ENCODE measurements at regions of chr11 and their contacts with region 1.

Region 1: GRCh38 chr11:130002846-130003716 is 446 bp upstream of the PRDM10 start:
- DNase-seq: peak; percentile 94
- H3K4me3 ChIP-seq: peak overlapping the region; percentile 75
- H3K27ac ChIP-seq: peak overlapping the region; percentile 99
- H3K27me3 ChIP-seq: no peaks in the 10 kb centered on the region
- CTCF ChIP-seq: no peak

Region 2: DNA sequence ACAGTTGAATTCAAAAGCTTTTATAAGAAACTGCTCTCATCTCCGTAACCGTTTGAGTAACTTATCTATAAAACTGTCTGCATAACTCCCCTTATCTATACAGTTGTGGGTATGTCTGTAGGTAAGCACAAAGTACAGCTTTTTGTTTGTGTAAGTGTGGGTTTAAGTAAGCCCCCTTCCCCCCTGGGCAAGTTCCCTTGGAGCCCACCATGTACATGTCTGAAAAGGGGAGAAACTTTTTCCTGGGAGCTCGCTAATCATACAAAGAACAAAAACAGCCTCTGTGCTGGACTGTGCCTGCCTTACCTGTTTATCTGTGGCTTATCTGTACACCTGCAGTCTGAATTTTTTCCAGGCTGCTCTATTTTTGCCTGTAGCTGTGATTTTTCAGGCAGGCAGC is 223.7 kb before region 1 on chr11:
- CTCF ChIA-PET with region 1: no interaction called
- POLR2A ChIA-PET with region 1: no interaction called
- DNase-seq: no peak
- H3K4me3 ChIP-seq: no peak overlapping the region
- H3K27ac ChIP-seq: no peak overlapping the region
- H3K27me3 ChIP-seq: peaks cover 8% of the 10 kb centered on the region
- CTCF ChIP-seq: no peak

Region 3: GRCh38 chr11:129935723-129936122 is 67.4 kb before region 1 on chr11:
- CTCF ChIA-PET with region 1: no interaction called
- POLR2A ChIA-PET with region 1: no interaction called
- DNase-seq: no peak
- H3K4me3 ChIP-seq: no peak overlapping the region
- H3K27ac ChIP-seq: no peak overlapping the region
- H3K27me3 ChIP-seq: no peaks in the 10 kb centered on the region
- CTCF ChIP-seq: no peak

Region 4: DNA sequence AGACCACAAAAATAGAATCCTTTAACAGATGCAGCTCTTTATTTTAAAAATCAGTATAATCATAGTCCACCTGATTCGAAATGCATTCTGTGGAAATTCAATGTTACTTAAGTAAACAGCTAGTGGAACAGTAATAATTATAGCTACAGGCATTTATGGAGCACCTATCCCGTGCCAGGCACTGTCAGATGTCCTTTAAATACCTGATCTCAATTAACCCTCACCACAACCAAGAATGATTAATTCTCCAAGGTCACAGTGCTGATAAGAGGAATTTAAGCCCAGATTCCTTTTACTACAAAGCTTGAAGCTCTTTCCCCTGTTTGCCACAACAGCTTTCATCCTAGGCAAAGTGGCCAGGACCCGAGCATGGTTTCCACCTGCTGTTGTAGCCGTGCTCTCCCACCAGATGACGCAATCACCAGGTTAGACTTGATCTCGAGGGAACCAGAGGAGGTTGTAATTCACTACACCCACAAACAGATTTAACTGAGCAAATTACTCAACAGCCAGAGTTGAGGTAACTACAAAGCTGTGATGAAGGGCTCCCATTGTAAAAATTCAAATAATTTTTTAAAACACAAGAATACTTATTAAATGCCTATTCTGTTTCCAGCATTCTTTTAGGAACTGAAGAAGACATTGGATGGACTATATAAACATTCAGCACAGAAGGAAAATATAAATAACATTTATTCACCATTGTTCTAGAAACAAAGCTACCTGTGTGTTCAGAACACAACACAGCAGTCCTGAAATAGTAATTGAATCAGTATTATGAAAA is 10.7 kb before region 1 on chr11:
- CTCF ChIA-PET with region 1: no interaction called
- POLR2A ChIA-PET with region 1: interaction called, 12 read pairs
- DNase-seq: no peak
- H3K4me3 ChIP-seq: no peak overlapping the region
- H3K27ac ChIP-seq: no peak overlapping the region
- H3K27me3 ChIP-seq: no peaks in the 10 kb centered on the region
- CTCF ChIP-seq: no peak

Region 5: GRCh38 chr11:130020323-130020722 is 17.2 kb after region 1 on chr11:
- CTCF ChIA-PET with region 1: no interaction called
- POLR2A ChIA-PET with region 1: interaction called, 16 read pairs
- DNase-seq: no peak
- H3K4me3 ChIP-seq: no peak overlapping the region
- H3K27ac ChIP-seq: no peak overlapping the region
- H3K27me3 ChIP-seq: no peaks in the 10 kb centered on the region
- CTCF ChIP-seq: no peak

Region 6: DNA sequence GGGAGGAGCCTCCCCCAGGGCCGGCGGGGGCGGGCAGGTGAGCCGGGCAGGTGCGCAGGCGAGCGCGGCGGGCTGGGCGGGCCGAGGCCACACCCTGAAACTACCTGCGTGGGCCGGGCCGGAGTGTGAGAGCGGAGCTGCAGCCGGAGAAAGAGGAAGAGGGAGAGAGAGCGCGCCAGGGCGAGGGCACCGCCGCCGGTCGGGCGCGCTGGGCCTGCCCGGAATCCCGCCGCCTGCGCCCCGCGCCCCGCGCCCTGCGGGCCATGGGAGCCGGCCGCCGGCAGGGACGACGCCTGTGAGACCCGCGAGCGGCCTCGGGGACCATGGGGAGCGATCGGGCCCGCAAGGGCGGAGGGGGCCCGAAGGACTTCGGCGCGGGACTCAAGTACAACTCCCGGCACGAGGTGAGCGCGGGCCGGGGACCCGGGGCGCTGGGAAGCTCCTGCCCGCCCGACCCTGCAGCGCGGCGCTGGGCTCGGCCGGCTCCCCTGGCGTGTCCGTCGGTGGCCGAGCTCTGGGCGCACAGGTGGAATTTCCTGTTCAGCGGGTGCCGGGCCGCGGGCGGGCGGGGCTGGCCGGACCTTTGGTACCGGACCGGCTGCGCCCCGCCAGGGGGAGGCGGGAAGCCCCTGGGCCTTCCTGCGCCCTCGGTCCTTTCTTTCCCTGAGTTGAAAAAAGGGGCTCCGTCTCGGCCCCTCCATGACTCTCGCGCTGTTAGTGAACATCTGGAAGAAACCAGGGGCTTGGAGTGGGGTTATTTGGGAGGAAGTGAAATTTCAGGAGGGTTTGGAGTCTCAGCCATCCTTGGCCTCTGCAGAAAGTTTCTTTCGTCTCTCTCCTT is 156.8 kb after region 1 on chr11 and contains the start of gene ST14:
- CTCF ChIA-PET with region 1: no interaction called
- POLR2A ChIA-PET with region 1: no interaction called
- DNase-seq: no peak
- H3K4me3 ChIP-seq: no peak within 1 kb of the TSS
- H3K27ac ChIP-seq: no peak within 1 kb of the TSS
- H3K27me3 ChIP-seq: peaks cover 48% of the 10 kb centered on the region
- CTCF ChIP-seq: no peak
- polyA plus RNA-seq, gene ST14: 0.10 TPM in 1 of 2 replicates, not detected in the other